ENCODE measurements at regions of chr3 and their contacts with region 1.

Region 1: GRCh38 chr3:15439476-15439875 is 12.1 kb downstream of the EAF1 start:
- DNase-seq: no peak
- H3K4me3 ChIP-seq: no peak overlapping the region
- H3K27ac ChIP-seq: no peak overlapping the region
- H3K4me1 ChIP-seq: no peaks in the 10 kb centered on the region
- H3K27me3 ChIP-seq: no peaks in the 10 kb centered on the region
- CTCF ChIP-seq: no peak
- EP300 ChIP-seq: no peak
- POLR2A ChIP-seq: no peak

Region 2: DNA sequence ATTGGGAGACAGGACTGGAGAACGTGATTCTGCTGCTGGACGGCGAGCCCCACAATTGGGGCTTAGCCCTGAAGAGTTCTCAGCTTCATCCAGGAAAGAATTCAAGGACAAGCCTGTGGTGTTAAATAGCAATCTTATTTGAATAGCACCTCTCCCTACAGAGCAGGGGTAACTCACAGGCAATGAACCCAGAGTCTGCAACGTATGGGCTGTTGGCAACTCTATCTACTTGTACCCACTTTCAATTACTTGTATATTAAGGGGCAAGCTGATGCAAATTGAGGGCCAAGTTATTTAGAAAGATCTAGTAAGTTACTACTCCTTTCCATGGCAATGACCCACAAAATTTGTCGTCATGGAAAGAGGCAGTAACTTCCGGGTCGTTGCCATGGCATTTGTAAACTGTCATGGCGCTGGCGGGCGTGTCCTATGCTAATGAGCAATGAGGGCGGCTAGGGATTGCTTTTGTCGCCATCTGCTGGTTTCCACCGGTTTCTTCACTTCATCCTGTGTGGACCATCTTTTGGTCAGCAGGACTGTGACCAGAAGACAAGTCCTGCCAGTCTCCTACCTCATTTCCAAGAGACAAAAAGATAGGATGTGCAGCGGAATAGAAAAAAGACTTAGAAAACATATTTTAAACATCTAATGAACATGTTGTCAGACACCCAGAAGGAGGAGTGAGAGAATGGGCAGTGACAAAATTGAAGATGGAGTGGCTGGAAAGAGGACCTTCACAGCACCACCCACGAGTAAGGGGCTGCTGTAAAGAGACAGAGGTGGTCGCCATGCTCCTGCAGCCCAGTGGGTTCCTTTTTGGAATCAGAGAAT is 61.3 kb before region 1 on chr3:
- intact Hi-C with region 1: no loop called
- DNase-seq: peak; percentile 93 to 98 (median 96)
- H3K4me3 ChIP-seq: no peak overlapping the region
- H3K27ac ChIP-seq: peak overlapping the region; percentile 2 to 66
- H3K4me1 ChIP-seq: peaks cover 2% of the 10 kb centered on the region
- H3K27me3 ChIP-seq: no peaks in the 10 kb centered on the region
- CTCF ChIP-seq: peak; percentile 90 to 93 (median 92)
- EP300 ChIP-seq: peak; percentile 77
- POLR2A ChIP-seq: no peak

Region 3: GRCh38 chr3:15562560-15562959 is 123.1 kb after region 1 on chr3:
- intact Hi-C with region 1: loop called in 1 of 4 experiments (anchors 10 kb)
- DNase-seq: no peak
- H3K4me3 ChIP-seq: no peak overlapping the region
- H3K27ac ChIP-seq: no peak overlapping the region
- H3K4me1 ChIP-seq: no peaks in the 10 kb centered on the region
- H3K27me3 ChIP-seq: no peaks in the 10 kb centered on the region
- CTCF ChIP-seq: no peak
- EP300 ChIP-seq: no peak
- POLR2A ChIP-seq: no peak

Measured in ovary (tissue), 10 donors.